Dorsolateral prefrontal cortex (tissue), 120 donors: ENCODE measurements at regions of chr17 and their contacts with region 1.

Region 1: DNA sequence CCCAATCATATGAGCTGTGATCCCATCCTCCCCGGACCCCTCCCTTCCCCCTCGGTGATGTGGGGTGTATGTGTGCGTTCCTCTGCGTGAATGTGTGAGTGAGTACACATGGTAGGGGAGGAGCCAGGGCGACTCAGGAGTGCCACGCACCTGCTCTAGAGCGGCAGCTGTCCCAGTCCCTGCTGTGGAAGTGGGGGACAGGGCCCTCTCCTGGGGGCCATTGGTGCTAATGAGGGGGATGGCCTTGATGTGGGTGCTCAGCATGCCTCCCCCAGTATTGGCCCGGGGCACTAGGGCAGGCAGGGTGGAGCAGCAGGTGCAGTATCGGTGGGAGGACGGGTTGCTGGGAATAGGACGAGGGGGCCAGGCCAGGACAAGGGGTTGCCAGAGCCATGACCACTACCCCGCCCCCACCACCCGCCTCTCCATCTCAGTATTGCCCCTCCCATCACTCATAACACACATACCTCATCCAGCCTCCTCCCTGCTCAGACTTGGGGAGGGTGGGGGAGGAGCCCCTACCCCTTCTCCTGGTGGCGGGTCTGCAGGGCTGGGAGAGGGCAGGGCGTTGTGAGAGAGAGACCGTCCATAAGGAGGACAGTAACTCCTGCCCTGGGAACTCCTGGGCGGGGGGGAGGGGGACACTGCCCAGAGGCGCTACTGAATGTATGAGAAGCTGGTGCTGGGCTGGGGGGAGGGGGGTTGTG is 8.5 kb downstream of the NR1D1 start:
- DNase-seq: no peak
- H3K4me3 ChIP-seq: peak overlapping the region in 3 of 59 donors; percentile 6 to 46 (median 11)
- H3K27ac ChIP-seq: peak overlapping the region in 58 of 59 donors; percentile 17 to 100 (median 95)
- H3K27me3 ChIP-seq: no peaks in the 10 kb centered on the region
- CTCF ChIP-seq: no peak

Region 2: GRCh38 chr17:39872751-39873150 is 219.1 kb before region 1 on chr17:
- intact Hi-C with region 1: no loop called
- DNase-seq: no peak
- H3K4me3 ChIP-seq: no peak overlapping the region
- H3K27ac ChIP-seq: no peak overlapping the region
- H3K27me3 ChIP-seq: peaks cover 0 to 53% (median 11%) of the 10 kb centered on the region in 45 donors
- CTCF ChIP-seq: peak in 7 of 56 donors; percentile 5 to 35 (median 14)

Region 3: GRCh38 chr17:40062329-40063186 is 29.3 kb before region 1 on chr17 and contains the start of gene THRA:
- intact Hi-C with region 1: loop called in 1 of 2 experiments (anchors 5 kb)
- DNase-seq: peak in 7 of 10 donors; percentile 36 to 86 (median 76)
- H3K4me3 ChIP-seq: peak within 1 kb of the TSS; percentile 67 to 100 (median 99)
- H3K27ac ChIP-seq: peak within 1 kb of the TSS; percentile 96 to 100 (median 100)
- H3K27me3 ChIP-seq: no peaks in the 10 kb centered on the region
- CTCF ChIP-seq: peak in 21 of 56 donors; percentile 1 to 50 (median 29)
- total RNA-seq, gene THRA: 178 to 301 (median 231) TPM